A673 (cell line): ENCODE measurements at regions of chr17 and their contacts with region 1.

Region 1: DNA sequence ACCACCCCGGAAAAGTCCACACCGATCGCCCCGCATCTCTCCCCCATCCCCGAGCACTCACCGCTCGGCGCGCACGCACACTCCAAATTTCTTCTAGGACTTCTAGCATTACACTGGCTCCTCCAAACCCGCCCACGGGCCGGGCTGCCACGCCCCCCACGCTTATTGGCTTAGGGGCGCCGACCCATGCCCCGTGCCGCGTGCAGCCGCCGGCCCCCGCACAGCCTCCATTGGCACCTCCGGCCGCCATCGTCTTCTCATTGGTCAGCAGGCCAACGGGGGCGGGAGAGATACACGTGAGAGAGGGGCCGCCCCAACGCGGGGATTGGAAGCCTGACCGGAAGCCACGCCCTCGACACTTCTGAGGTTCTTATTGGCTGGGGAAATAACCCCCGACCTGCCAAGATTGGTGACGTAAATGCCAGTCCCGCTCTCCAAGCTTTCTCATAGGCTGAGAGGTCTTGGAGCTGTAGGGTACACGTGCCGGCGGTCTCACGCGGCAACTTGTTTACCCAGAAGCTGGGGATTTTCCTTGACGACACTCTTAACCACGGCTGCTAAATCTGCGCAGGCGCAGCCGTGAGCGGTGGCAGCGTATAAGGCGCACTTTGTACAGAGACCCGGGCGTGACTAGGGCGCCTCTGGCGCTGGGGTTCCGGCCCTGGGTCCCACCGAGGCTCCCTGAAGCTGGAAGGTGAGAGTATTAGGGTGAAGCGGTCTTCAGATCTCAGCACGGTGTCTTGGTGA is 4.2 kb upstream of the PER1 start:
- DNase-seq: peak; percentile 100
- H3K4me3 ChIP-seq: peak overlapping the region; percentile 52
- H3K27ac ChIP-seq: peak overlapping the region; percentile 97
- H3K4me1 ChIP-seq: peaks cover 46% of the 10 kb centered on the region
- H3K27me3 ChIP-seq: no peaks in the 10 kb centered on the region
- CTCF ChIP-seq: 0 out of 2 replicates have a peak, but pooled peaks have one; percentile 34

Region 2: DNA sequence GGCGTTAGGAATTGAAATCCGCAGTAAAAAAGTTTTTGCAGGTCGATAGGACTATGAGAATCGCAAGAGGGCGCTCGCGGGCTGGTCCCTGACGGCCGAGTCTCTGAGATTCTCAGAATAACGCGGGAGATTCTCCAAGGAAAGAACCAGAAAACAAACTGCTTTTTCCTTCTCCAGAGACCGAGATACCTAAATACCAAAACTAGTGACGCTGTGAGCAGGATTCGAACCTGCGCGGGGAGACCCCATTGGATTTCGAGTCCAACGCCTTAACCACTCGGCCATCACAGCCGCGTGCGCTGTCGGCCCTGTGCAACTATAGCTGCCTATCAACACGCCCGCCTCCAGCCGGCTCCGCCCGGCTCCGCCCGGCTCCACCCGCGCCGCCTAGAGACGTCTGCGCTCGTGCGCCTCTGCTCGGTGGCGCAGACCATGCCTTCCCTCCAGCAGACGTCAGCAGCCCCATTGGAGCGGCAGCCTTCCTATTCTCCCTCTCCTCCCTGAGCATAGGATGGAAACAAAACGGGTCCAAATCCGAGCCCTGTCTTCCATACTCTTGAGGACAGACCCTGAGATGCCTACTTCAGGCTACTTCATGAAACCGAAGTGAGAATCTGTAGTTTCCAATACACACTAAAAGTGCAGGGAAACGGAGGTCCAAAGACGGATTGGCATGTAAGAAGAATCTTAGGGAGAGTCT is 17.6 kb before region 1 on chr17:
- CTCF ChIA-PET with region 1: no interaction called
- POLR2A ChIA-PET with region 1: no interaction called
- intact Hi-C with region 1: loop called (anchors 1 kb)
- DNase-seq: peak; percentile 99
- H3K4me3 ChIP-seq: peak overlapping the region; percentile 55
- H3K27ac ChIP-seq: peak overlapping the region; percentile 87
- H3K4me1 ChIP-seq: no peaks in the 10 kb centered on the region
- H3K27me3 ChIP-seq: no peaks in the 10 kb centered on the region
- CTCF ChIP-seq: peak; percentile 91

Region 3: GRCh38 chr17:8173056-8173870 is 16.8 kb after region 1 on chr17:
- CTCF ChIA-PET with region 1: interaction called, 4 read pairs
- POLR2A ChIA-PET with region 1: interaction called, 7 read pairs
- intact Hi-C with region 1: loop called (anchors 1 kb)
- DNase-seq: peak; percentile 96
- H3K4me3 ChIP-seq: peak overlapping the region; percentile 44
- H3K27ac ChIP-seq: peak overlapping the region; percentile 98
- H3K4me1 ChIP-seq: peaks cover 18% of the 10 kb centered on the region
- H3K27me3 ChIP-seq: no peaks in the 10 kb centered on the region
- CTCF ChIP-seq: no peak

Region 4: DNA sequence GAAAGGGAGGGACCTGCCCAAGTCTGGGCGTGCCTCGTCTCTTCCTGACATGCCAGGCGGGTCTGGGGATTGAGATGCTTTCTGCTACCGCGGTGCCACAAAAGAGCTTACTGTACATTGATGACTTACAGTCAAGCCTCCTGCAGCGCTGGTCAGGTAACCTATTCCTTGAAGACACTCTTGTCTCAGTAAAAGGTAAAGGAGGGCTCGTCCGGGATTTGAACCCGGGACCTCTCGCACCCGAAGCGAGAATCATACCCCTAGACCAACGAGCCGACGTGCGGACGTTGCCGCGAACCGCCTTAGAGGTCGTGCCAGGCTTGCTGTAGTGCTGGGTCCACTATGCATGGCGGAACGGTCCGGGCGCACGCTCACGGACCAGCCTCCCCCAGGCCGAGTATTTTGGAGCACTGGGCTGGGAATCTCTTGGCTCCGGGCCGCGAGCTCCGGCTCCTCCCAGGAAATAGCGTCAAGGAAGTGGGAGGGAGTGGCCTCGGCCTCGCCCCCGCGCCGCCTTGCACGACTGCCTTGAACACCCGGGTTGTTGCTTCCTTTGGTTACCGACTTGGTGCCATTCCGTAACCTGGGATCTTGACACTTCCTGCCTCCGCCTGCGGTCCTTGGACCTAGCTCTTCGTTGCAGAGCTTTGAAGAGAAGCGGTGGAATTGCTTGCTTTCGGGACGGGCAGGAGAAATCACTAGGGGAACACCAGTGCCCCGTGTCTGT is 66.4 kb after region 1 on chr17:
- CTCF ChIA-PET with region 1: no interaction called
- POLR2A ChIA-PET with region 1: no interaction called
- intact Hi-C with region 1: no loop called
- DNase-seq: peak; percentile 96
- H3K4me3 ChIP-seq: peak overlapping the region; percentile 85
- H3K27ac ChIP-seq: peak overlapping the region; percentile 95
- H3K4me1 ChIP-seq: peaks cover 13% of the 10 kb centered on the region
- H3K27me3 ChIP-seq: no peaks in the 10 kb centered on the region
- CTCF ChIP-seq: no peak

Region 5: DNA sequence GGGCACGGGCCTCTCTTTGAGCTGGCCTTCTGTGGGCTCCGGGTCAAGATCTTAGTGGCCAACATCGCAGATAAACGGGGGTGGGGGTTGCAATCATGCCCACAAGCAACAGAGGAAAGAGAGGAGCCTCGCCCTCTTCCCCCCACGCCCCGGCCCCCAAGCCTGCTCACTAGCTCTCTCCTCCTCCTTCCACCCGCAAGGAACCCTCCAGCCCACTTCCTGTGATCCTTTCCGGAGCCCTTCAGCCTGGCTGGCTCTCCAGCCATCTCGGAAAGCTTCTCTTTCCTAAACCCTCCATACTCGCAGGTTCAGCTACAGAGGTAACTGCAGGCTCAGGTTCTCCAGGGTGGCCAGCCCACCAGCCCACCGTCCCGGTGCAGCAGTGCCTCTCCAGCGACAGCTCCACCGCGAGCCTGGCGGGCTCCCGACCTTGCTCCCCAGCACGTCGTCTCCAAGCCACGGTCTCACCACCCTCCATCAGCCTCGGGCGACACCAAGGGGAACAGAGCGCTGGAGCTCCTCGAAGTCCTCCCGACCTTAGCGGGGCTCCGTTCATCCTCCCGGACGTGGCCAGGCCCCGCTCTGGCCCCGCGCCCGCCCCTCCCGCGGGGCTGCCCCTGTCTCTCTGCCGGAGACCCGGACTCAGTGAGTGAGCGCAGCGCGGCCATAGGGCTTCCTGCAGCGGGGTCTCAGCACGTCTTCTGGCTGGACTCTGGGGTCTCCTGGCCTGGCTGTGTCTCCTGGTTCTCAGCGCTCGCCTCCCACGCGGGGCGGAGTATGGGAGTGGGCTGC is 170.3 kb after region 1 on chr17:
- CTCF ChIA-PET with region 1: no interaction called
- POLR2A ChIA-PET with region 1: no interaction called
- intact Hi-C with region 1: no loop called
- DNase-seq: no peak
- H3K4me3 ChIP-seq: peak overlapping the region; percentile 39
- H3K27ac ChIP-seq: no peak overlapping the region
- H3K4me1 ChIP-seq: no peaks in the 10 kb centered on the region
- H3K27me3 ChIP-seq: no peaks in the 10 kb centered on the region
- CTCF ChIP-seq: no peak